A673 (cell line): ENCODE measurements at regions of chr7 and their contacts with region 1.

Region 1: GRCh38 chr7:83936056-83936708 is 258.4 kb downstream of the SEMA3A start:
- DNase-seq: peak; percentile 88
- H3K4me3 ChIP-seq: no peak overlapping the region
- H3K27ac ChIP-seq: no peak overlapping the region
- H3K4me1 ChIP-seq: peaks cover 5% of the 10 kb centered on the region
- H3K27me3 ChIP-seq: no peaks in the 10 kb centered on the region
- CTCF ChIP-seq: peak; percentile 94

Region 2: GRCh38 chr7:84188786-84189405 is 252.7 kb after region 1 on chr7:
- CTCF ChIA-PET with region 1: interaction called, 3 read pairs
- POLR2A ChIA-PET with region 1: no interaction called
- intact Hi-C with region 1: loop called (anchors 5 kb)
- DNase-seq: peak; percentile 78
- H3K4me3 ChIP-seq: no peak overlapping the region
- H3K27ac ChIP-seq: no peak overlapping the region
- H3K4me1 ChIP-seq: peaks cover 47% of the 10 kb centered on the region
- H3K27me3 ChIP-seq: no peaks in the 10 kb centered on the region
- CTCF ChIP-seq: peak; percentile 79

Region 3: DNA sequence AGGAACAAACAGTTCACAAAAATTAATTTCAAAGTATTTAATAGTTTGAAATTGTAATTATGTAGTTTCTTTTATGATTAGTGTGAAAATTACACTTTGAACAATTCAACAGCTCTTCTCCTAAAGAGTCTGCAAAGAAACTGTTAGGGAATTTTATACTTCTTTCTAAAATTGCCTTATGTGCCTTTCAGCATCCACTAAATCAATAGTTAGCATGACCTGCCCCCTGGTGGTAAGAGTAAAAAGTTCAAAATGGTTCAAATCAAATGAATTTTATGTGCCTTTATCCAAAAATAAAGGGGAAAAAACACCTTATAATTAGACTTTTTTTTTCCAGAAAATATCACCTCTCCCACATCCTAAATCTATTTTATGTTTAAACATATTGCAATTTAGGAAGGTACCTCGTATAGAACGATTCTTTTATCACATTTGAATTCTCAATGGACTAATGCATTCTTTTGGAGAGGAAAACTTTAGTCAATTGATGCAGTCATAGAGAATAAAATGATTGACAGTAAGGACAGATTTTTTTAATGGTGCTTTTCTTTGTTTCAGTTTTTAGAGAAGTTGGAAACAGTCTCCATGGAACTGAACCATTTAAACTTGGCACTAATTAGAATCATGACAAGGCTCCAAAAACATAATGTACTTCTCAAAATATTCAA is 1087.0 kb after region 1 on chr7:
- CTCF ChIA-PET with region 1: interaction called, 3 read pairs
- POLR2A ChIA-PET with region 1: no interaction called
- intact Hi-C with region 1: loop called (anchors 1 kb)
- DNase-seq: peak; percentile 76
- H3K4me3 ChIP-seq: no peak overlapping the region
- H3K27ac ChIP-seq: no peak overlapping the region
- H3K4me1 ChIP-seq: no peaks in the 10 kb centered on the region
- H3K27me3 ChIP-seq: no peaks in the 10 kb centered on the region
- CTCF ChIP-seq: peak; percentile 70

Region 4: GRCh38 chr7:85464042-85464651 is 1528.0 kb after region 1 on chr7:
- CTCF ChIA-PET with region 1: no interaction called
- POLR2A ChIA-PET with region 1: no interaction called
- intact Hi-C with region 1: loop called (anchors 10 kb)
- DNase-seq: peak; percentile 47
- H3K4me3 ChIP-seq: no peak overlapping the region
- H3K27ac ChIP-seq: no peak overlapping the region
- H3K4me1 ChIP-seq: no peaks in the 10 kb centered on the region
- H3K27me3 ChIP-seq: no peaks in the 10 kb centered on the region
- CTCF ChIP-seq: peak; percentile 47